Heart left ventricle (tissue), 16 donors: ENCODE measurements at regions of chr5 and their contacts with region 1.

Region 1: DNA sequence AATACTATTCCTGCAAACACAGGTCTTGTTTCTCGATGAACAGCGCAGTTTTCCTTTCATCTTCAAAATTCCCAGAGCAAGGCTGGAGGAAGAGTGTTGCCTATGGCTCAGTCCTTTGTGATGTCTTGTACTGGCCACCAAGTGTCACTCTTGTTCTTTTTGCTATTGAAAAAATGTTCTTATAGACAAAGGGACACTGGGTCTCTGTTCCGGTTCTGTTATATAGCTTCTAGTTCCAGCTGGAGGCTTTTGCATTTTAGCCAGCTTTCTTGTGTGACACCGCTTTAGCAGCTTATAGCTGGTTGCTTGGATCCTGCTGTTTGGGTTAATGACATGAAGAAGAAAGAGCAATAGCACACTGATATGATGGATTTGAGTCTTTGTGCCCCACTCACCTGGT is 343.7 kb upstream of the KCNN2 start:
- DNase-seq: no peak
- ATAC-seq: peak in 3 of 4 donors; percentile 54 to 58 (median 55)
- H3K4me3 ChIP-seq: no peak overlapping the region
- H3K27ac ChIP-seq: no peak overlapping the region
- H3K4me1 ChIP-seq: no peaks in the 10 kb centered on the region
- H3K27me3 ChIP-seq: peaks cover 0 to 5% (median 0%) of the 10 kb centered on the region in 9 donors
- CTCF ChIP-seq: peak in 11 of 12 donors; percentile 3 to 66 (median 45)
- POLR2A ChIP-seq: no peak

Region 2: DNA sequence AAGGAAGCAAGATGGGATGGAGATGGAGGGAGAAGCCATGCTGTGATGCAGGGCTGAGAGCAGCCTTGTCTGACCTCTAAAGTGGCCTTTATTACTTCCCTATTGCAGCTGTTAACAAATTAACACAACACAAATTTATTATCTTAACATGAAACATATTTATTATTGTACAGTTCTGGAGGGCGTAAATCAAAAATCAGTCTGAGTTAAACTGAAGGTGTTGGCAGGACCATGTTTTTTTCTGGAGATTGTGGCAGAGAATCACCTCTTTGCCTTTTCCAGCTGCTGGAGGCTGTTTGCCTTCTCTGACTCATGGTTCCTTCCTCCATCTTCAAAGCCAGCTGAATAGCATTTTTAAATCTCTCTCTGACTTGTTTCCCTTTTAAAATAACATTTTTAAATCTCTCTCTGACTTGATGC is 522.8 kb before region 1 on chr5:
- intact Hi-C with region 1: no loop called
- DNase-seq: no peak
- ATAC-seq: peak in 1 of 4 donors; percentile 71
- H3K4me3 ChIP-seq: no peak overlapping the region
- H3K27ac ChIP-seq: no peak overlapping the region
- H3K4me1 ChIP-seq: no peaks in the 10 kb centered on the region
- H3K27me3 ChIP-seq: peaks cover 0 to 33% (median 0%) of the 10 kb centered on the region in 9 donors
- CTCF ChIP-seq: no peak
- POLR2A ChIP-seq: no peak

Region 3: DNA sequence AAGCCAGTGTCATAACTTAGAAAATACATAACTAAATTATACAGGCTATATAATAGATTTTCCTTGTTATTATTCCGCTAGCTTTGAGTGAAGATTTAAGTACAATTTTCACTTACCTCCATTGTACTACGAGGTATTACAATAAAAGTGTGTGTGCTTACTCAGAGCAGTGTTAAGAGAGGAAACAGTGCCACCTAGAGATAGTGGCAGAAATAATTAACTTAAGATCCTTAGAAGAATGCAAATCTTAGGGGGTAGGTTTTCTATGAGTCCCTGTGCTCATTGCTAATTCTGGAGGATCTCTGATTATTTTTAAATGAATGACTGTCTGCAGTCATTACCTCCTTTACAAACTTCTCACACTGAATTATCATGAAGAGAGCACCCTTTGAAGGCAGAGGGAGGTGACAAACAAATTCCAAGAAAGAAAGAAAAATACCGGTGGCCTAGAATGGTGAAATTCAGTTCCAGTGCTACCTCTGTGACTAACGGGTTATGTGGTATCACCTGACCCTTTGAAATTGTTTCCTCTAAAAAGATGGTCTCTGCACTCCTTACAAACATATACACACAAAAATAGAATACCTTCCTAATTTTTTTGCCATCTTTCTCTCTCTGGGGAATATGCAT is 771.7 kb after region 1 on chr5:
- intact Hi-C with region 1: loop called in 1 of 10 experiments (anchors 10 kb)
- DNase-seq: no peak
- ATAC-seq: peak in 1 of 4 donors; percentile 29
- H3K4me3 ChIP-seq: no peak overlapping the region
- H3K27ac ChIP-seq: no peak overlapping the region
- H3K4me1 ChIP-seq: no peaks in the 10 kb centered on the region
- H3K27me3 ChIP-seq: peaks cover 0 to 21% (median 0%) of the 10 kb centered on the region in 9 donors
- CTCF ChIP-seq: peak in 10 of 12 donors; percentile 20 to 55 (median 36)
- POLR2A ChIP-seq: no peak